OCI-LY7 (cell line): ENCODE measurements at regions of chr4 and their contacts with region 1.

Region 1: DNA sequence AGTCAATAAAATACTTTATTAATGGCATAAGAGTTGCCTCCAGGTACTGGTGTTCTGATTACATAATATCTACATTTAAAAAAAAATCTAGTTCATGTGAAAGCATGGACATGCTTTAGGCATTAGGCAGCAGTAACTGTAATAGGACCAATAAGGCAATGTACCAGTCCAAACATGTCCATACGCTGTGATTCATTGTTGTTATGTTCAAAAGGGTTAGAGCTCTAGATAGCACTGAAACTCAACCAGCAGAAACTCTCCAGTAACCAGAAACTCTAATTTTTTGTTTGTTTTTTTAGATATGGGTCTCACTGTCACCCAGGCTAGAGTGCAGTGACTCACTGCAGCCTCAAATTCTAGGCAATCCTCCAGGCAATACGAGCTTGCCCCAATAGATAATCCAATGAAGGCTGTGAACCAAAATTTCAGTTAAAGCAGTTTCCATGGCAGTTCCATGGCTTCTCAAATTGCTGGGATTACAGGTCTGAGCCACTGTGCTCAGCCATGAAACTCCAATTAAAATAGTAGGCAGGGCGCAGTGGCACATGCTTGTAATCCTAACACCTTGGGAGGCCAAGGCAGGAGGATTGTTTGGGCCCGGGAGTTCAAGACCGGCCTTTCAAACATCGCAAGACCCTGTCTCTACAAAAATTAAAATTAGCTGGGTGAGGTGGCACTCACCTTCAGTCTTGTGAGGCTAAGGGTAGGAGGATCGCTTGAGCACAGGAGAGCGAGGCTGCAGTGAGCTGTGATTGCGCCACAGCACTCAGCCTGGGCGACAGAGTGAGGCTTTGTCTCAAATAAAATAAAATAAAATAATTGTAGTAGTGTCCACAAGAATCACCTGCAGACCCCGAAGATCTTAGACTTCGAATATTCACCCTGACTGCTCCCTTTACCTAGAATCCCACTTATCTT is 36.3 kb downstream of the MGARP start:
- DNase-seq: no peak
- H3K4me3 ChIP-seq: no peak overlapping the region
- H3K27ac ChIP-seq: no peak overlapping the region
- H3K4me1 ChIP-seq: peaks cover 25% of the 10 kb centered on the region
- CTCF ChIP-seq: no peak

Region 2: GRCh38 chr4:139253713-139254112 is 10.0 kb after region 1 on chr4:
- CTCF ChIA-PET with region 1: no interaction called
- POLR2A ChIA-PET with region 1: interaction called, 18 read pairs
- intact Hi-C with region 1: no loop called
- DNase-seq: no peak
- H3K4me3 ChIP-seq: no peak overlapping the region
- H3K27ac ChIP-seq: peak overlapping the region; percentile 45
- H3K4me1 ChIP-seq: peaks cover 42% of the 10 kb centered on the region
- CTCF ChIP-seq: no peak